Adrenal gland (tissue), 19 donors: ENCODE measurements at regions of chr20 and their contacts with region 1.

Region 1: DNA sequence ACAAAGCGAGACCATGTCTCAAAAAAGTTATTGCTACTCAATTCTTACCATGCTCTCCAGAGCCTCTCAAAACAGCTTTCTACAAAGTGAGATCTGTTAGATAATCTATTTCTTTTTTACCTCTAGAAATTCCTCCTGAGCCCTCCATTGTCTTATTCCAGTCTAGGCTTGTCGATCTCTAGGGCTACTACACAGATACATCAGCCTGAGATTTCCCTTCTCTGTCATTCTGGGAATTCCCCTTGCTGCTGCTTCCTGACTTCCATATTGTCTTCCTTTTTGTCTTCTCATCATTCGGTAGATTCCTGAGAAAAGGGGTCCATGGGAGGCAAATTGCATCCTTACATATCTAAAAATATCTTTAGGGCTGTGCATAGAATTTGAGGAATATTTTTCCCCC is 75.6 kb upstream of the GNRH2 start:
- DNase-seq: no peak
- H3K4me3 ChIP-seq: no peak overlapping the region
- H3K27ac ChIP-seq: no peak overlapping the region
- H3K4me1 ChIP-seq: peaks cover 8 to 14% of the 10 kb centered on the region in 2 donors
- H3K27me3 ChIP-seq: no peaks in the 10 kb centered on the region
- CTCF ChIP-seq: no peak
- POLR2A ChIP-seq: no peak

Region 2: GRCh38 chr20:2873010-2873746 is 94.7 kb before region 1 on chr20 and contains the start of gene PTPRA:
- intact Hi-C with region 1: loop called in 1 of 2 experiments (anchors 10 kb)
- DNase-seq: peak; percentile 92 to 96 (median 93)
- H3K4me3 ChIP-seq: peak within 1 kb of the TSS; percentile 43 to 98 (median 77)
- H3K27ac ChIP-seq: peak within 1 kb of the TSS in 4 of 5 donors; percentile 19 to 83 (median 74)
- H3K4me1 ChIP-seq: peaks cover 3 to 50% of the 10 kb centered on the region in 2 donors
- H3K27me3 ChIP-seq: no peaks in the 10 kb centered on the region
- CTCF ChIP-seq: no peak
- POLR2A ChIP-seq: peak; percentile 69 to 85
- total RNA-seq, gene PTPRA: 33.5 to 62.5 (median 47.7) TPM